ENCODE measurements at regions of chr12 and their contacts with region 1.

Region 1: GRCh38 chr12:46372544-46373110 is at the start of gene SLC38A2:
- DNase-seq: peak; percentile 94 to 96 (median 95)
- H3K4me3 ChIP-seq: peak within 1 kb of the TSS; percentile 76 to 93
- H3K4me3 Mint-ChIP-seq: peak within 1 kb of the TSS; percentile 94 to 99 (median 96)
- H3K27ac ChIP-seq: peak within 1 kb of the TSS; percentile 88
- H3K27ac Mint-ChIP-seq: peak within 1 kb of the TSS; percentile 93 to 99 (median 99)
- H3K4me1 ChIP-seq: peaks cover 54% of the 10 kb centered on the region
- H3K4me1 Mint-ChIP-seq: peaks cover 39 to 68% (median 44%) of the 10 kb centered on the region in 4 donors
- H3K27me3 ChIP-seq: no peaks in the 10 kb centered on the region
- H3K27me3 Mint-ChIP-seq: peaks cover 0 to 6% of the 10 kb centered on the region in 2 donors
- total RNA-seq, gene SLC38A2: 200 to 208 TPM

Region 2: DNA sequence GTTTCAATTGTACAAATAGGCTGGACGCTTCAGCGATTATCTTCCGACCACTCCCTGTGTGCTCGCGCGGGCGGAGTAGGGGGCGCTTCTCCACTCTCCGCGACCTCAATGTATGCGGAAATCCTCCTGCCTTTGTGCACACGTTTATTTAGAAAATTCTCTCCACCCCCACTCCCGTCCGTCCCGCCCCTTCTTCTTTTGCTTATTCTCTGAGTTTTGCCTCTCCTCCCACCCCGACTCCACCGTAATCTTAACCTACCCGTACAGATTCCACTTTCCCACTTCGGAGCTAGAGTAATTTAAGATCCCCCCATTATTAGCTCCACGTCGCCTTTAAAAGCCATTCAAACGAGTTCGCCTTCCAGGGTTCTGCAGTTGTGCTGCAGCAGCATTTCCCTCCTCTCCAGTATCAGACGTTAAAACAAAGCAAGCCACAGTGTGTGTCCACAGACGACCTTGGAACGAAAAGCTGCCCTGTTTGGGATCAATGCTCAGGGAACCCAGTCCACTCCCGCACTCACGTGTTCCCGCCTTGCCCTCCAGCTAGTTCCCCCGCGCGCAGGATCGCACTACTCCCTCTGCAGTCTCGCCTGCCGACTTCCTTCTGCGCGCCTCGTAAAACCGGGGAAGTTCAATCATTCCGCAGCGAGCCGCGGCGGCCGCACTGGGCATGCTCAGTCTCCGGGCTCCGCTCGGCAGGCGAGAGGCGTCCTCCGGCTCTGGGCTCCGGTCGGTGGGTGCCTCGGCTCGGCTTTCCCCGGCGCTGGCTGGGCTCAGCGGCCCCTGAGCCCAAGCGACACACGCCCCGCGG is 1157.0 kb before region 1 on chr12 and contains the start of gene ANO6:
- CTCF ChIA-PET with region 1: no interaction called
- POLR2A ChIA-PET with region 1: no interaction called
- intact Hi-C with region 1: loop called (anchors 5 kb)
- DNase-seq: peak; percentile 73 to 81 (median 76)
- H3K4me3 ChIP-seq: peak within 1 kb of the TSS; percentile 68 to 94
- H3K4me3 Mint-ChIP-seq: peak within 1 kb of the TSS; percentile 92 to 99 (median 96)
- H3K27ac ChIP-seq: peak within 1 kb of the TSS; percentile 69
- H3K27ac Mint-ChIP-seq: peak within 1 kb of the TSS; percentile 81 to 98 (median 95)
- H3K4me1 ChIP-seq: peaks cover 48% of the 10 kb centered on the region
- H3K4me1 Mint-ChIP-seq: peaks cover 34 to 77% (median 53%) of the 10 kb centered on the region in 4 donors
- H3K27me3 ChIP-seq: no peaks in the 10 kb centered on the region
- H3K27me3 Mint-ChIP-seq: no peaks in the 10 kb centered on the region
- total RNA-seq, gene ANO6: 29.5 to 32.6 TPM

Region 3: GRCh38 chr12:46217541-46218321 is 154.9 kb before region 1 on chr12:
- CTCF ChIA-PET with region 1: no interaction called
- POLR2A ChIA-PET with region 1: interaction called, 15 read pairs
- intact Hi-C with region 1: loop called (anchors 1 kb)
- DNase-seq: peak; percentile 76 to 85 (median 81)
- H3K4me3 ChIP-seq: peak overlapping the region; percentile 42 to 56
- H3K4me3 Mint-ChIP-seq: peak overlapping the region; percentile 78 to 90 (median 84)
- H3K27ac ChIP-seq: peak overlapping the region; percentile 87
- H3K27ac Mint-ChIP-seq: peak overlapping the region; percentile 96 to 100 (median 98)
- H3K4me1 ChIP-seq: peaks cover 99% of the 10 kb centered on the region
- H3K4me1 Mint-ChIP-seq: peaks cover 88 to 98% (median 93%) of the 10 kb centered on the region in 4 donors
- H3K27me3 ChIP-seq: no peaks in the 10 kb centered on the region
- H3K27me3 Mint-ChIP-seq: no peaks in the 10 kb centered on the region

Region 4: GRCh38 chr12:46382964-46383653 is 10.5 kb after region 1 on chr12:
- CTCF ChIA-PET with region 1: interaction called, 8 read pairs
- POLR2A ChIA-PET with region 1: interaction called, 114 read pairs
- intact Hi-C with region 1: loop called (anchors 1 kb)
- DNase-seq: peak; percentile 88 to 95 (median 90)
- H3K4me3 ChIP-seq: peak overlapping the region; percentile 26 to 78
- H3K4me3 Mint-ChIP-seq: peak overlapping the region; percentile 82 to 94 (median 90)
- H3K27ac ChIP-seq: peak overlapping the region; percentile 83
- H3K27ac Mint-ChIP-seq: peak overlapping the region; percentile 87 to 98 (median 97)
- H3K4me1 ChIP-seq: peaks cover 19% of the 10 kb centered on the region
- H3K4me1 Mint-ChIP-seq: peaks cover 19 to 31% (median 25%) of the 10 kb centered on the region in 4 donors
- H3K27me3 ChIP-seq: no peaks in the 10 kb centered on the region
- H3K27me3 Mint-ChIP-seq: no peaks in the 10 kb centered on the region

Region 5: GRCh38 chr12:46459861-46460545 is 87.4 kb after region 1 on chr12:
- CTCF ChIA-PET with region 1: no interaction called
- POLR2A ChIA-PET with region 1: interaction called, 15 read pairs
- intact Hi-C with region 1: loop called (anchors 2 kb)
- DNase-seq: no peak
- H3K4me3 ChIP-seq: no peak overlapping the region
- H3K4me3 Mint-ChIP-seq: peak overlapping the region in 7 of 8 donors; percentile 78 to 92 (median 80)
- H3K27ac ChIP-seq: no peak overlapping the region
- H3K27ac Mint-ChIP-seq: peak overlapping the region; percentile 82 to 97 (median 94)
- H3K4me1 ChIP-seq: peaks cover 56% of the 10 kb centered on the region
- H3K4me1 Mint-ChIP-seq: peaks cover 43 to 63% (median 54%) of the 10 kb centered on the region in 4 donors
- H3K27me3 ChIP-seq: no peaks in the 10 kb centered on the region
- H3K27me3 Mint-ChIP-seq: no peaks in the 10 kb centered on the region

Region 6: DNA sequence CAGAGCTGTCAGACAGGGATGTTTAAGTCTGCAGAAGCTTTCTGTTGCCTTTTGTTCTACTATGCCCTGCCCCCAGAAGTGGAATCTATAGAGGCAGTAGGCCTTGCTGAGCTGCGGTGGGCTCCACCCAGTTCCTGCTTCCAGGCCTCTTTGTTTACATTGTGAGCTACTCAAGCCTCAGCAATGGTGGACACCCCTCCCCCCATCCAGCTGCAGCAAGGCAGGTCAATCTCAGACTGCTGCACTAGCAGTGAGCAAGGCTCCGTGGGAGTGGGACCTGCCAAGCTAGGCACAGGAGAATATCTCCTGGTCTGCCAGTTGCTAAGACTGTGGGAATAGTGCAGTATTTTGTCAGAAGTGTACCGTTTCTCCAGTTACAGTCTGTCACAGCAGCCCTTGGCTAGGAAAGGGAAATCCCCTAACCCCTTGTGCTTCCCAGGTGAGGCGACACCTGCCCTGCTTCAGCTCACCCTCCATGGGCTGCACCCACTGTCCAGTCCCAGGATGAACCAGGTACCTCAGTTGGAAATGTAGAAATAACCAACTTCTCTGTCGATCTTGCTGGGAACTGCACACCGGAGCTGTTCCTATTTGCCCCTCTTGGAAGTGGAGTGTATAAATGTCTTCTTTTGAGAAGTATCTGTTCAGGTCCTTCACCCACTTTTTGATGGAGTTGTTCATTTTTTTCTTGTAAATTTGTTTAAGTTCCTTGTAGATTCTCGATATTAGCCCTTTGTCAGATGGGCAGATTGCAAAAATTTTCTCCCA is 213.4 kb after region 1 on chr12:
- CTCF ChIA-PET with region 1: interaction called, 3 read pairs
- POLR2A ChIA-PET with region 1: interaction called, 29 read pairs
- intact Hi-C with region 1: loop called (anchors 10 kb)
- DNase-seq: peak; percentile 54 to 71 (median 62)
- H3K4me3 ChIP-seq: peak overlapping the region in 1 of 2 donors; percentile 16
- H3K4me3 Mint-ChIP-seq: peak overlapping the region; percentile 53 to 78 (median 71)
- H3K27ac ChIP-seq: no peak overlapping the region
- H3K27ac Mint-ChIP-seq: peak overlapping the region; percentile 65 to 93 (median 83)
- H3K4me1 ChIP-seq: peaks cover 21% of the 10 kb centered on the region
- H3K4me1 Mint-ChIP-seq: peaks cover 51 to 73% (median 63%) of the 10 kb centered on the region in 4 donors
- H3K27me3 ChIP-seq: no peaks in the 10 kb centered on the region
- H3K27me3 Mint-ChIP-seq: no peaks in the 10 kb centered on the region

Region 7: DNA sequence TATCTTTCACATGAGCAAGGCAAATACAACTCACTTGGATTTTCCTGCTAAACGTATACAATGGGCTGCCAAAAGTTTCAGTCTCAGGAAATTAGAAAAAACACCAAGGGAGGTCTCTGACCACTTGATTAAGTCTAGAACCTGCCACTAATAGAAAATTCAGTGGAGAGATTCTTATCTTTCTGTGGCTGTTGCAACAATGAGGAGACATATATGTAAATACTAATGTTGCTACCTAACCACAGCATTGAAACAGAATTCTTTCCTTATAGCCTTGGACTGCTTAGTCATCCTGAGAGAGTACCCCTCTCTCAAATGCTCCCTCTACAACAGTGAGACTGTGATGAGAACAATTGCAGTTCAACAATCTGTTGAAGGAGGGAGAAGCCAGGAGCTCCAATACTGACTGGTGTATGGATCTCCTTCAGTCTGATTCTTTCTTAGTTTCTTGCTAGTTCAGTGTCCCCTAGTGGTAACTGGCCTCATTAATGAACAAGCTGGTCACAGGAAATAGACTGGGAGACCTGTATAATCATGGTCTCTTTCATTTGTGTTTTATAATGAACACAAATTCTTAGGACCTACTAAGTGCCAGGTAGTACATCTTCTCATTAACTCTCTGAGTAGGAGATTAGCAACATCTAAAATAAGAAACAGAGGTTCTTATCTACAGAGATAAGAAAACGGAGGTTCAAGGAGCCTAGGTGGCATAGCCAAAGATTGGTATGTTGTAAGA is 288.7 kb after region 1 on chr12:
- CTCF ChIA-PET with region 1: interaction called, 6 read pairs
- POLR2A ChIA-PET with region 1: interaction called, 23 read pairs
- intact Hi-C with region 1: loop called (anchors 1 kb)
- DNase-seq: peak in 4 of 5 donors; percentile 48 to 55 (median 52)
- H3K4me3 ChIP-seq: no peak overlapping the region
- H3K4me3 Mint-ChIP-seq: no peak overlapping the region
- H3K27ac ChIP-seq: no peak overlapping the region
- H3K27ac Mint-ChIP-seq: peak overlapping the region in 1 of 7 donors; percentile 43
- H3K4me1 ChIP-seq: peaks cover 14% of the 10 kb centered on the region
- H3K4me1 Mint-ChIP-seq: peaks cover 16 to 27% (median 22%) of the 10 kb centered on the region in 4 donors
- H3K27me3 ChIP-seq: no peaks in the 10 kb centered on the region
- H3K27me3 Mint-ChIP-seq: no peaks in the 10 kb centered on the region